ENCODE measurements at regions of chr1 and their contacts with region 1.

Region 1: DNA sequence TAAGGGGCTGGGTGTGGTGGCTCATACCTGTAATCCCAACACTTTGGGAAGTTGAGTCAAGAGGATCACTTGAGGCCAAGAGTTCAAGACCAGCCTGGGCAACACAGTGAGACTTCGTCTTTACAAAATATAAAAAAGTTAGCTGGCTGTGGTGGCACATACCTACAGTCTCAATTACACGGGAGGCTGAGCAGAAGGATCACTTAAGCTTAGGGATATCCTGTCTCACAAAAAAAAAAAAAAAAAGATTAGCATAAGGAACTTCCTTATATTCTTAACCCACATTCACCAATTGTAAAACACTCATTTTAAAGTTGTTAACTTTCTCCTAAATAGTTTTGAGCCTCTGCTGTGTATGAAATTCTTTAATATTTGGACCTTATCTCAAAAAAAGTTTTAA is 53.1 kb downstream of the ABCD3 start:
- DNase-seq: no peak
- ATAC-seq: no peak
- H3K4me3 ChIP-seq: no peak overlapping the region
- H3K27ac ChIP-seq: no peak overlapping the region
- H3K4me1 ChIP-seq: no peaks in the 10 kb centered on the region
- H3K27me3 ChIP-seq: no peaks in the 10 kb centered on the region
- CTCF ChIP-seq: no peak
- EP300 ChIP-seq: no peak
- POLR2A ChIP-seq: no peak
- RAD21 ChIP-seq: no peak

Region 2: DNA sequence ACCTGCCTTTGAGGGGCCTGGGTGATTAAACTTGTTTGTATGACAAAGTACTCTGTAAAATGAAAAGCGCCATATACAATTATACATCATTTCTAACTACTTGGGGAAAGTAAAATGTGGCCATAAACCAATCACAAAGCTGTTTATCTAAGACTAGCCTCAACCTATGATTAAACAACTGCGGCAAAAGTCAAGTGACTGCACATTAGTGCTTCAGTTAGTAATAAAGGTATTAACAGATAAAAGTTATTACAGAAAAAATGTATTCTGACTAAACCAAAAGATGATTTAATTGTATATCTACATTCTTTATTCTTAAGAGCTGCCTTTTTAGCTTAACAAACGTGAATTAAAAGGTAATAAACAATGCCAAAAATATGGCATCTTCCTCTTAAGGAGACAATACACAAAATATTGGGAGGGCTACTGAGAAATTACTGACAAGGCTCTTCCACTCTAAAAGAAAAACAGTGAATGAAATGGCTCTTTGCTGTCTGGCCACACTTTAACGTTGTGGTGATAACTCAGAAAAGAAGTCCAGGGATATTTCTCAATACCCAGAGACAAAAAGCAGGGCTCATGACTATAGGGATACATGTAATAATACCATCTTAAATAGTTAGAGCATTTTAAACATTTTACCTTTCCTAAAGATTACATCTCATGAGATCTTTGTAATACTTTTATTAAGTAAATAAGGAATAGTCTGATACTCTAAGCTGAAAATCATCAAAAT is 242.5 kb before region 1 on chr1:
- CTCF ChIA-PET with region 1: no interaction called
- POLR2A ChIA-PET with region 1: no interaction called
- RAD21 ChIA-PET with region 1: no interaction called
- SMC1A ChIA-PET with region 1: no interaction called
- in situ Hi-C with region 1: no loop called
- intact Hi-C with region 1: no loop called
- DNase-seq: no peak
- ATAC-seq: no peak
- H3K4me3 ChIP-seq: no peak overlapping the region
- H3K27ac ChIP-seq: no peak overlapping the region
- H3K4me1 ChIP-seq: no peaks in the 10 kb centered on the region
- H3K27me3 ChIP-seq: peaks cover 0 to 2% of the 10 kb centered on the region in 2 experiments; a peak in 1 of 4 replicates
- CTCF ChIP-seq: no peak
- EP300 ChIP-seq: no peak
- POLR2A ChIP-seq: no peak
- RAD21 ChIP-seq: no peak

Region 3: GRCh38 chr1:94481473-94481933 is 10.2 kb after region 1 on chr1:
- CTCF ChIA-PET with region 1: interaction called, 45 read pairs
- POLR2A ChIA-PET with region 1: no interaction called
- RAD21 ChIA-PET with region 1: interaction called, 15 read pairs
- SMC1A ChIA-PET with region 1: interaction called, 7 read pairs
- in situ Hi-C with region 1: no loop called
- intact Hi-C with region 1: no loop called
- DNase-seq: peak; percentile 9
- ATAC-seq: peak; percentile 98
- H3K4me3 ChIP-seq: no peak overlapping the region
- H3K27ac ChIP-seq: no peak overlapping the region
- H3K4me1 ChIP-seq: no peaks in the 10 kb centered on the region
- H3K27me3 ChIP-seq: no peaks in the 10 kb centered on the region
- CTCF ChIP-seq: peak; percentile 79 to 84 (median 83)
- EP300 ChIP-seq: no peak
- POLR2A ChIP-seq: no peak
- RAD21 ChIP-seq: peak; percentile 82

Region 4: GRCh38 chr1:94486990-94487389 is 15.7 kb after region 1 on chr1:
- CTCF ChIA-PET with region 1: interaction called, 45 read pairs
- POLR2A ChIA-PET with region 1: no interaction called
- RAD21 ChIA-PET with region 1: interaction called, 15 read pairs
- SMC1A ChIA-PET with region 1: interaction called, 6 read pairs
- in situ Hi-C with region 1: no loop called
- intact Hi-C with region 1: no loop called
- DNase-seq: no peak
- ATAC-seq: no peak
- H3K4me3 ChIP-seq: no peak overlapping the region
- H3K27ac ChIP-seq: no peak overlapping the region
- H3K4me1 ChIP-seq: no peaks in the 10 kb centered on the region
- H3K27me3 ChIP-seq: no peaks in the 10 kb centered on the region
- CTCF ChIP-seq: no peak
- EP300 ChIP-seq: no peak
- POLR2A ChIP-seq: no peak
- RAD21 ChIP-seq: no peak

Measured in GM12878 (cell line).